Heart right ventricle (tissue), 16 donors: ENCODE measurements at regions of chr1 and their contacts with region 1.

Region 1: DNA sequence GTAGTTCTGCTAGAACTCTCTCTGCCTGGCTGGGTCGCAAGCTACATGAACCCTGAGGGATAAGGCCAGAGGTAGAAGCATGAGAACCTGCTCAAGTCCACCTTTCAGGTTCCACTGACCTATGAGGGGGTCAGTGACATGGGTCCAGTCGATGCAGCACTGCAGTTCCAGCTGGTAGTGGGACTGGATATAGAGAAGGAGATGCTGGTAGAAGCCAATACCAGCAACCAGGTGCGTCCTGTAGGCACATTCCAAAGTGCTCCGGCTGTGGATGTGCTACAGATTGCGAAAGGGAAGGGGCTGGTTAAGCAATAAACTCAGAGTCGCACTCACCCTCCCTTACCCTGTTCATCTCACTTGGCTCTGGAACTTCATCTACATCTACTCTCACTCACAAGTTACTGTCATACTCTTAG is 5.7 kb downstream of the SMG5 start:
- DNase-seq: no peak
- ATAC-seq: peak in 1 of 8 donors; percentile 8
- H3K4me3 ChIP-seq: no peak overlapping the region
- H3K27ac ChIP-seq: peak overlapping the region in 1 of 10 donors; percentile 72
- H3K4me1 ChIP-seq: peaks cover 0 to 58% (median 21%) of the 10 kb centered on the region in 9 donors
- H3K27me3 ChIP-seq: no peaks in the 10 kb centered on the region
- CTCF ChIP-seq: no peak

Region 2: DNA sequence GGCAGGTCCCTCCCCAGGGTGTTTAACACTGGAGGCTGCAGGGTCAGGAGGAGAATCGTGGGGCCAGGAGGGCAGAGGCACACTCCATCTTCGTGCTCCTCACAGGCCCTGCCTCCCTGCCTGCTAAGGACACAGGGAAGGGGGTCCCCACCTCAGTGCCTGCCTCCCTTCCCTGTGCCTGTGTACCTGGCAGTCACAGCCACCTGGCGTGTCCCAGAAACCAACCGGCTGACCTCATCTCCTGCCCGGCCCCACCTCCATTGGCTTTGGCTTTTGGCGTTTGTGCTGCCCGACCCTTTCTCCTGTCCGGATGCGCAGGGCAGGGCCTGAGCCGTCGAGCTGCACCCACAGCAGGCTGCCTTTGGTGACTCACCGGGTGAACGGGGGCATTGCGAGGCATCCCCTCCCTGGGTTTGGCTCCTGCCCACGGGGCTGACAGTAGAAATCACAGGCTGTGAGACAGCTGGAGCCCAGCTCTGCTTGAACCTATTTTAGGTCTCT is 35.6 kb before region 1 on chr1:
- intact Hi-C with region 1: loop called in 1 of 10 experiments (anchors 5 kb)
- DNase-seq: no peak
- ATAC-seq: no peak
- H3K4me3 ChIP-seq: no peak overlapping the region
- H3K27ac ChIP-seq: no peak overlapping the region
- H3K4me1 ChIP-seq: peaks cover 8 to 14% (median 12%) of the 10 kb centered on the region in 9 donors
- H3K27me3 ChIP-seq: peaks cover 0 to 19% (median 8%) of the 10 kb centered on the region in 7 donors
- CTCF ChIP-seq: no peak